ENCODE measurements at regions of chr6 and their contacts with region 1.

Region 1: DNA sequence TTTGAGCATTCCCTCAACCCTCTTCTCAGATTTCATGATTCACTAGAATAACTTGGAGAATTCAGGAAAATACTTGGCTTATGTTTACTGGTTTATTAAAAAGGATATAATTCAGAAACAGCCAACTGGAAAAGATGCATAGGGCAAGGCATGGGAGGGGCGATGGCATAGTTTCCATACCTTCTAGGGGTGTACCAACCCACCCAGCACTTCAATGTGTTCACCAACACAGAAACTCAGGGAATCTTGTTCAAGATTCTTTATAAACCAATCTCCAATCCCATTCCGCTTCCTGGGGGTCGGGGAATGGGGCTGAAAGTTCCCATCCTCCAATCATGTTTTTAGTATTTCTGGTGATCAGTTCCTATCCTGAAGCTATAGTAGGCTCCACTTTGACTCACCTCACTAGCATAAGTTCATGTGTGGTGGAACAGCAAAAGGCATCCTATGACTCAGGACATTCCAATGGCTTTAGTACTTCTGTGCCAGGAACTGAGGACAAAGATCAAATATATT is 164.4 kb downstream of the SIM1 start:
- DNase-seq: peak; percentile 67 to 97
- H3K4me3 ChIP-seq: peak overlapping the region; percentile 36
- H3K27ac ChIP-seq: peak overlapping the region; percentile 96
- H3K4me1 ChIP-seq: peaks cover 69% of the 10 kb centered on the region
- H3K27me3 ChIP-seq: no peaks in the 10 kb centered on the region
- CTCF ChIP-seq: no peak

Region 2: GRCh38 chr6:100116411-100117194 is 183.7 kb before region 1 on chr6:
- CTCF ChIA-PET with region 1: no interaction called
- POLR2A ChIA-PET with region 1: no interaction called
- intact Hi-C with region 1: loop called (anchors 1 kb)
- DNase-seq: peak; percentile 53 to 59
- H3K4me3 ChIP-seq: no peak overlapping the region
- H3K27ac ChIP-seq: no peak overlapping the region
- H3K4me1 ChIP-seq: peaks cover 5% of the 10 kb centered on the region
- H3K27me3 ChIP-seq: no peaks in the 10 kb centered on the region
- CTCF ChIP-seq: peak; percentile 88

Region 3: GRCh38 chr6:100202417-100203194 is 97.7 kb before region 1 on chr6:
- CTCF ChIA-PET with region 1: no interaction called
- POLR2A ChIA-PET with region 1: interaction called, 8 read pairs
- intact Hi-C with region 1: loop called (anchors 2 kb)
- DNase-seq: peak; percentile 31 to 83
- H3K4me3 ChIP-seq: no peak overlapping the region
- H3K27ac ChIP-seq: peak overlapping the region; percentile 95
- H3K4me1 ChIP-seq: peaks cover 16% of the 10 kb centered on the region
- H3K27me3 ChIP-seq: no peaks in the 10 kb centered on the region
- CTCF ChIP-seq: no peak

Region 4: GRCh38 chr6:100269189-100269588 is 31.1 kb before region 1 on chr6:
- CTCF ChIA-PET with region 1: no interaction called
- POLR2A ChIA-PET with region 1: interaction called, 11 read pairs
- intact Hi-C with region 1: loop called (anchors 2 kb)
- DNase-seq: no peak
- H3K4me3 ChIP-seq: no peak overlapping the region
- H3K27ac ChIP-seq: no peak overlapping the region
- H3K4me1 ChIP-seq: no peaks in the 10 kb centered on the region
- H3K27me3 ChIP-seq: no peaks in the 10 kb centered on the region
- CTCF ChIP-seq: no peak

Region 5: DNA sequence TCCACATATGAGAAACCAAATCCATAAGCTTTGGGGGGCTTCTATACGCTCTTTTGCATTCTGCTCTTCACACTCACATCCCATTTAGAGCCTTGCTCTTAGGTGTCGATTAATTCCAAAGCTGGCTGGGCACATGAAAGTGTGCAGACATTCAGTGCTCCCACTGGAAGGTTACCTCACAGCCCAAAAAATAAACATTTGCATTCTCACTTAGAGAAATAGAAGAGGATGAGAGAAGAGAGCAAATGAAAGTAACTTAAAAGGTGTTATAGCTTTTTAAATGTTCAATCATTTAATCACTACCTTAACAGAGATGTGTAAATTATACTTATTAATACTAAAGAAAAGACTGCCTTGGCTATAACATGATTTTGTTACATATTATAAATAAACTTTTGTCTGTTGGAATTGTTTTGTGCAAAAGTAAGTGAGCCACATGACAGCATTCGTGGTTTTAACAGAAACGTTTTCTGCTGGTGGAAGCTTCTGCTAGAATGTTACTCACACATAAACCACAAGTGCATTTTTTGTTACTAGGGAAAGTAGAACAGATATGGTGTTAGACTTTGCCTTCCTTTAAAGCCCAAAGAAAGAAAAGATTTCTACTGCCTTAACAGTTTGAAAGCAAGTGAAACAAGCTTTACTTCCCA is 47.7 kb after region 1 on chr6:
- CTCF ChIA-PET with region 1: no interaction called
- POLR2A ChIA-PET with region 1: no interaction called
- intact Hi-C with region 1: loop called (anchors 2 kb)
- DNase-seq: no peak
- H3K4me3 ChIP-seq: no peak overlapping the region
- H3K27ac ChIP-seq: no peak overlapping the region
- H3K4me1 ChIP-seq: no peaks in the 10 kb centered on the region
- H3K27me3 ChIP-seq: no peaks in the 10 kb centered on the region
- CTCF ChIP-seq: no peak

Region 6: DNA sequence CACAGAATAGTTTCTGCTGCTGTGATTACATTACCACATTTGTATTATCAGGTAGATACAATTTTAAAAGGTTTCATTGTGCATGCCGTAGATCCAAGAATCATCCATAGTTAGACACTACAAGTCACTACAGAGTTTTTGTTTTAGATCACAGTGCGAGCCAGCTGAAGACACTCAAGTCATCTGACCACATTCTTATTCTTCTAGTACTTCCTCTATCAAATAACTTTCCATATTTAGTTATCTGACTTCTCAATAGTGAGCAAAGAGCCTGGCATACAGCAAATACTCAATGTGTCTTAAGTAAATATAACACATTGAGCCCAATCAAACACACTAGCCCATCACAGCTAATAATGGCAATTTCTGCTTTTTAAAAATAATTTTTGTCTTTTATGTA is 385.5 kb after region 1 on chr6:
- CTCF ChIA-PET with region 1: no interaction called
- POLR2A ChIA-PET with region 1: no interaction called
- intact Hi-C with region 1: no loop called
- DNase-seq: no peak
- H3K4me3 ChIP-seq: no peak overlapping the region
- H3K27ac ChIP-seq: no peak overlapping the region
- H3K4me1 ChIP-seq: no peaks in the 10 kb centered on the region
- H3K27me3 ChIP-seq: no peaks in the 10 kb centered on the region
- CTCF ChIP-seq: no peak

Measured in PC-9 (cell line).